ENCODE measurements at regions of chr1 and their contacts with region 1.

Region 1: DNA sequence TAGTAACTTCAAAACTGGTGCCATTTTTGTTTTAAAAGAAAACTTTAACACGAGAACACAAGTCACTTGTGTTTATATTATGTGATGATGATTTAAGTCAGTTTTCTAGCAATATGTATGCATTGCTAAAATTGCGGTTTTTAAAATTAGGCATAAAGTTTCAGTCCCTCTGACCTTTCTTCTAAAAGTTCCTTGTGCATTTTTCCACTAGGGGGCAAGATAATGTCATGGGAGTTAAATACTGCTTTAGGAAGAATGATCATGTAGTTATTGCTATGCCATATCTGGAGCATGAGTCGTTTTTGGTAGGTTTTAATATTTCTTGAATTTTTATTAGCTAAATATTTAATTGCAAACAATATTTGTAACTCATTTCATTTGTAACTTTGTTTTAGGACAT is 10.7 kb downstream of the CDC7 start:
- DNase-seq: no peak
- ATAC-seq: no peak
- H3K4me3 ChIP-seq: no peak overlapping the region
- H3K27ac ChIP-seq: no peak overlapping the region
- H3K4me1 ChIP-seq: no peaks in the 10 kb centered on the region
- H3K27me3 ChIP-seq: no peaks in the 10 kb centered on the region
- CTCF ChIP-seq: peak; percentile 73

Region 2: DNA sequence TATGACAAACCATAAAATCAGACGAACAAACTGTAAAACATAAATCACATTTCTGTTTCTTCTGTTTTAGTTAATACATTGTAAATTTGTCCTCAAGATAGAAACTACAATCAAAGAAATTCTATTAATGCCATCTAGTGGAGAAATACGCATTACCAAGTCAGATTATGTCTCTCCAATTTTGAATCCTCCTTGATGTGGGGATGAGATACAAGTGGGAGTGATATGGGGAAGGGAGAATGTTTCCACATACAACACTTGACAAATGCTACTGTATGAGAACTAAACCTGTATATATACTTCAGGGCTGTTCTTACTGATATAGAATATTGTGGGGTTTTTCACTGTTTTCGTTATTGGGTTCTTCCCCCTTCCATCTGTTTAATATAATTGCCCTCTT is 109.4 kb before region 1 on chr1:
- intact Hi-C with region 1: no loop called
- DNase-seq: no peak
- ATAC-seq: no peak
- H3K4me3 ChIP-seq: no peak overlapping the region
- H3K27ac ChIP-seq: no peak overlapping the region
- H3K4me1 ChIP-seq: peaks cover 6% of the 10 kb centered on the region
- H3K27me3 ChIP-seq: no peaks in the 10 kb centered on the region
- CTCF ChIP-seq: peak; percentile 53

Region 3: DNA sequence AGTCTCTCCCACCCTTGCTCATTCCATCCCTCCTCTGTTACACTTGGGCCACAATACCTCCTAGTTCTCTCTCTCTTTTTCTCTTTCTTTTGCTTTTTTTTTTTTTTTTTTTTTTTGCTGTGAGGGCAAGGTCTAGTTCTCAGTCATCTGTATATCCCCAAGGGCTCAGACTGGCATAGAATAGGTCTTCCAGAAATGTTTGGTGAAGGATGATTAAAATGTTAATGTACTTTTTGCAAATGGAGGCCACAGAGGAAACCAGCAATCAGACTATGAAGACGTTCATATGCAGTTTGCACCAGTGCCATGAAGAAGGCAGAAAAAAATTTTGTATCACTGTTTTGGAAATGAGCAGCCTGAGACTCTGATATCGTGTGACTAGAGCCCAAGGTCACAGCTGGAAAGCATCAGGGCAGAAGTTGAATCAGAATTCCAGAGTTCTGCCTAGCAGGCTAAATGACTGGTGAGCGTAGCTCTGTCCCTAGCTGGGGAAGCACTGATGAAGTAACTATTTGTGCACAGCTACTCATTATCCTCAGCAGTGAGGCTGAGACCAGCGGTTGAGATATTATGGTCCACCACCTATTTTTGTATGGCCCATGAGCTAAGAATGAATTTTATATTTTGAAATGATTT is 188.1 kb after region 1 on chr1:
- intact Hi-C with region 1: no loop called
- DNase-seq: no peak
- ATAC-seq: peak; percentile 60
- H3K4me3 ChIP-seq: no peak overlapping the region
- H3K27ac ChIP-seq: peak overlapping the region; percentile 27
- H3K4me1 ChIP-seq: peaks cover 18% of the 10 kb centered on the region
- H3K27me3 ChIP-seq: no peaks in the 10 kb centered on the region
- CTCF ChIP-seq: no peak

Region 4: DNA sequence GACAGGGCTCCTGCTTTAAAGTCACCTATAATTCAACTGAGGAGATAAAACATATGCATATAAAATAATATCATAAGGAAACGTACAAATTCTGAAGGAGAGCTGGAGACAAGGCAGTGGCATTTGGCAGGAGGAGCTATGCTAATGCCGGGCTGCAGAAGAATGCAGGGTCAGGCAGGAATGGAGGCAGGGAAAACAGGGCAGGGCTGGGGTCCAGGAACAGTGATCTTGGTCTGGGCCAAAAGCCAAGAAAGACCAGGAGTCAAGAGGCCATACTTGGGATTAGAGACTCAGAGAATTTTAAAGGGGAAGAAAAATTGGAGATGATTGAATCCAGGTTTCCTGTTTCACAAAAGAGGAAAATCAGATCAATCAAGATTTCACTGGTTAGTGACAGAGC is 417.9 kb after region 1 on chr1:
- intact Hi-C with region 1: loop called (anchors 5 kb)
- DNase-seq: no peak
- ATAC-seq: peak; percentile 85
- H3K4me3 ChIP-seq: no peak overlapping the region
- H3K27ac ChIP-seq: peak overlapping the region; percentile 19
- H3K4me1 ChIP-seq: peaks cover 3% of the 10 kb centered on the region
- H3K27me3 ChIP-seq: no peaks in the 10 kb centered on the region
- CTCF ChIP-seq: no peak